Transverse colon (tissue), 4 donors: ENCODE measurements at regions of chr2 and their contacts with region 1.

Region 1: DNA sequence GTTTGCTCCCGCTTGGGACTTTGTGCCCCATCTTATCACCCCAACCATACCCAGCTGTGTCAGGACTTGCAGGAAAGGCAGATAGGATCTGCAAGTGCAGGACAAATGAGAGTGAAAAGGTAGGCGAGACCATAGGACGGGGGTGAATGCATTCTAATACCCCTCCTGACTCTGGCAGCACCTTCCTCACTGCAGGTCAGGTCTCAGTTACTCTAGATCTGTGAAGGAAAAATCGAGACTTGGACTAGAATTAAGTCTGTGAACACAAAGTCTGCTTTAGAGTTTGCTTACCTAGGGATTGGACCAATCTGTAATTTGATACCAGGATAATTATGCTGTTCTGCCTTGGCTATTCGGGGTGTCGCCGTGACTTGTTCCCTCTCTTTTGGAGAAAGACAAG is 19.7 kb downstream of the NT5DC4 start:
- DNase-seq: no peak
- H3K4me3 ChIP-seq: no peak overlapping the region
- H3K27ac ChIP-seq: no peak overlapping the region
- H3K4me1 ChIP-seq: peaks cover 0 to 10% (median 4%) of the 10 kb centered on the region in 4 donors
- H3K27me3 ChIP-seq: no peaks in the 10 kb centered on the region
- CTCF ChIP-seq: no peak
- EP300 ChIP-seq: no peak
- POLR2A ChIP-seq: no peak

Region 2: DNA sequence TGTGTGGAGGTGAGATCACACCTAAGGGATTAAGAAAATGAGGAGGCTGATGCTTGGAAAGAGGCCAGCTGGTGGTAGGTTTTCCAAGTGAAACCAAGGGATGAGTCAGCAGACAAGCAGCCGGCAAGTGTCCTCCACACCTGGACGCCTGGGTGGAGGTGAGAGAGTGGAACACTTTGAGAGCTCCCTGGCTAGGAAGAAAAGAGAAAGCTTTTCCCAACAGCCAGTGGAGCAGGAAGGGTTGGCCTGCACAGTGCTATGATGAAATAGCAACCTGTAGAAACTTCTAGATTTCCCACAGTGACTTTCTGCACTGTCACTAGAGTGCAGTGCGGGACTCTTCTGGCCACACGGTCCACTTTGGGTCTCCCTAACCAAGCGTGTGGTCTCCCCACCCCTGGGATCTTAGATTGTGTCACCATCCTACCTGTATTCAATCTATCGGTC is 150.9 kb after region 1 on chr2:
- in situ Hi-C with region 1: loop called in 2 of 4 experiments (anchors 5 kb)
- intact Hi-C with region 1: no loop called
- DNase-seq: no peak
- H3K4me3 ChIP-seq: no peak overlapping the region
- H3K27ac ChIP-seq: no peak overlapping the region
- H3K4me1 ChIP-seq: no peaks in the 10 kb centered on the region
- H3K27me3 ChIP-seq: no peaks in the 10 kb centered on the region
- CTCF ChIP-seq: no peak
- EP300 ChIP-seq: no peak
- POLR2A ChIP-seq: no peak